Activated T-helper 1 cell treated with anti-CD3 and anti-CD28 coated beads, Interleukin-12 subunit alpha, Interleukin-12 subunit beta, Interleukin-2, Interleukin-4 antibody, amounts not matched to agents 30 ng/mL and 10 ng/mL and 1 ng/mL, durations not matched to agents 14 hours and 24 hours and 36 hours (primary cell): ENCODE measurements at regions of chr1 and their contacts with region 1.

Region 1: GRCh38 chr1:26472901-26473845 is 933 bp downstream of the HMGN2 start:
- DNase-seq: peak; percentile 95
- H3K4me3 Mint-ChIP-seq: peak overlapping the region; percentile 89
- H3K27ac Mint-ChIP-seq: peak overlapping the region; percentile 53
- H3K4me1 Mint-ChIP-seq: peaks cover 64% of the 10 kb centered on the region
- H3K27me3 Mint-ChIP-seq: no peaks in the 10 kb centered on the region

Region 2: GRCh38 chr1:25737130-25737529 is 736.0 kb before region 1 on chr1:
- intact Hi-C with region 1: no loop called
- DNase-seq: no peak
- H3K4me3 Mint-ChIP-seq: no peak overlapping the region
- H3K27ac Mint-ChIP-seq: no peak overlapping the region
- H3K4me1 Mint-ChIP-seq: no peaks in the 10 kb centered on the region
- H3K27me3 Mint-ChIP-seq: peaks cover 42% of the 10 kb centered on the region

Region 3: DNA sequence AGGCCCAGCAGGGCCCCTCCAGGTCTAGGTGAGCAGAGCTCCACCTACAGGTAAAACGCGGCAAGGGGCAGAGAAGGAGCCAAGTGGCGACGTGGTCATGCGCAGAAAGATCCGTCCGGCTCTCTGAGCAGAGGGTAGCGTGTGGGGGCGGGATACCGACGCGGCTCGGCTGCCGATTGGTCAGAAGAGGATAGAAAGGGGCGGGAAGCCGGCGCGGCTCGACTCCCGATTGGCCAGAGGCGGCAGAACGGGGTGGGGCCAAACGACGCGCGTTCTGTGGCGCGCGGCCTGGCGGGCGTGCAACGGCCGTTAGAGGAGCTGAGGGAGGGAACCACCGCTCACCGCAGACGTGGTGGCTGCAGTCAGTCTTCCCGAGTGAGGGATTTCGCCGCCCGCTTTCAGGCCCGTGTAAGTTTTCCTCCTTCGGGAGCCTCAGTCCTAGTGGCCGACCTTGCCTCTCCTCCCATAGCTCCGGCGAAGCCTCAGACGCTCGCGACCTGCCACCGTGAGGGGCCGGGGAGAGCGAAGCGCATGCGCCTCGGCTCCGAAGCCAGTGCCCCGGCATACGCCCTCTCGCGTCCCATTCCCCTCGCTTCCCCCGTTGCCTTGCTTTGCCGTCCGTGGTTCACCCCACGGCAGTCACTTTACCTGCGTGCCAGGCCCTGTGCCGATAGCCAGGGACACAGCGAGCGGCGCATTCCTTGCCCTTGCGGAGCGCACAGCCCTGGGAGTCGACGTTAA is 239.1 kb before region 1 on chr1 and contains the start of gene CEP85:
- intact Hi-C with region 1: loop called (anchors 1 kb)
- DNase-seq: peak; percentile 98
- H3K4me3 Mint-ChIP-seq: peak within 1 kb of the TSS; percentile 100
- H3K27ac Mint-ChIP-seq: peak within 1 kb of the TSS; percentile 96
- H3K4me1 Mint-ChIP-seq: peaks cover 43% of the 10 kb centered on the region
- H3K27me3 Mint-ChIP-seq: peaks cover 4% of the 10 kb centered on the region
- total RNA-seq, gene CEP85: 37.0 and 37.1 TPM in 2 replicates

Region 4: DNA sequence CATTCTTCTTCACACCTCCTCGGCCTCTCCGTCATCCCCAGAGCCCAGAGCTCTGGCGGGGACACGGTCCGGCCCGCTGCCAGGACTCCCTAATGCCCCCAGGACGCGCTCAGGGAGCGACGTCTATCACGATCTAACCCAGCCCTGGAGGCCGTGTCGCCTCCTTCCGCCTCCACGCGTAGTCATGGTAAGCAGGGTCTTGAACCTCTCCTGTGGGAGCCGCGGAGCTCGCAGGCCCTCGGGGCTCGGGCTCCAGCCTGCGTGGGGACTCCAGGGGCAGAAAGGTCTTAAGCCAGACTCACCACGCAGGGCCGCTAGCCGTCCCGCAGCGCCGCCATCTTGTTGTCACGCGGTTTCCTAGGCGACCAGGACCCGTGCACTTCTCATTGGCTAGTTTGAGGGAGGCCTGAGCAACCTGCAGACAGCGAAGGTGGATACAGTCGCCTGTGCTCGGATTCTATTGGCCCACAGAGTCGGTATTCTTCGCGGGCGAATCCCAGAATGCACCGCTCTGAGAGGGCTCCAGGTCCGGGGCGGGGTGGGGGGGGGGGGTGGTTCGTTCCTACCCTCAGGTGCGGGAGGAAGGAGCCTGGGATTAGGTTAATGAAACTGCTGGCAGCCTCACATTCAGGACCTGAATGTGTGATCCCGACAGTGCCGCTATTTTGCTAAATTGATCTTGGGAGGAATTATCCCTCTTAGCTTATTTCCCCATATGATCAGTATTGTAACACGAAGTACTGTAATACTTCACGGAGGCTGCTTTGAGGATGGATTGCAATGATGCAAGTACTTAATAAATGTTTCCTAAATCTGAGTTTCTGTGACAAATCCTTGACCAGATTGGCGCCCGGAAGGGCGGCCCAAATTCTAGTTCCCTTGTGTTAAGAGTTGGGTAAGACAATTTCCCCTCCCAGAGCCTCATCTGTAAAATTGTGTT is 166.6 kb before region 1 on chr1 and contains the start of gene UBXN11:
- intact Hi-C with region 1: loop called (anchors 1 kb)
- DNase-seq: peak; percentile 92
- H3K4me3 Mint-ChIP-seq: peak within 1 kb of the TSS; percentile 99
- H3K27ac Mint-ChIP-seq: peak within 1 kb of the TSS; percentile 95
- H3K4me1 Mint-ChIP-seq: peaks cover 41% of the 10 kb centered on the region
- H3K27me3 Mint-ChIP-seq: no peaks in the 10 kb centered on the region
- total RNA-seq, gene UBXN11: 14.8 and 22.1 TPM in 2 replicates

Region 5: DNA sequence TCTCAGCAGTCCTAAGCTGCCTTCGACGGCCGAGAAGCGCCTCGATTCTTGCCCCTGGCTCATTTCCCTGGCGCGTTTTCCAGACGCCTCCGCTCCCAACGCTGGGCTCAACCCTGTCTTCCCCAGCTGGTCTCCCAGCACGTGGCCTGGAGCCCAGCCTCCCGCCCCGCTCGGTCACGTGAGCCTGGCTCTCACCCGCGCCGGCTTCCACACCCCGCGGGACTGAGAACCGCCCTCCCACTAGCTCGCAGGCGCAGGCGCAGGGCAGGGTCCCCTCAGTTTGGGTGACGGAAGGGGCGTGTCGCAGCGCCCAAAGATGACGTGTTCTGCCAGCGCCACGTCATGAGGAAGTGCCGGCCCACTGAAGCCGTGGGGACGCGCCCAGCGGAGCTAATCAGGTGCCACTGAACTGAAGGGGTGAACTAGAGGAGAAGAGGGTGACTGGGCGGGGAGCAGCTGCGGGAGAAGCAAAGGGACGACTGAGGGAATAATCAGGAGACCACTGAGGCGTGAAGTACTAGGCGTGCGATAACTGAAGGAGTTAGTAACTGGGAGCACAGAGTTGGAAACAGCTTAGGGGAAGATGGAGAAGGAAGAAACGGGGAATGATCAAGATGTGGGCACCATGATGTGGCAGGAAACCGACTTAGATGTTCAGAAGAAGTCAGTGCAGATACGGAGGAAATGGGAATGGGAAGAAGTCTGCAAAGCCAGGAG is 41.0 kb before region 1 on chr1 and contains the start of gene DHDDS:
- intact Hi-C with region 1: loop called (anchors 1 kb)
- DNase-seq: peak; percentile 98
- H3K4me3 Mint-ChIP-seq: peak within 1 kb of the TSS; percentile 94
- H3K27ac Mint-ChIP-seq: peak within 1 kb of the TSS; percentile 89
- H3K4me1 Mint-ChIP-seq: peaks cover 18% of the 10 kb centered on the region
- H3K27me3 Mint-ChIP-seq: peaks cover 12% of the 10 kb centered on the region
- total RNA-seq, gene DHDDS: 58.4 and 60.9 TPM in 2 replicates

Region 6: DNA sequence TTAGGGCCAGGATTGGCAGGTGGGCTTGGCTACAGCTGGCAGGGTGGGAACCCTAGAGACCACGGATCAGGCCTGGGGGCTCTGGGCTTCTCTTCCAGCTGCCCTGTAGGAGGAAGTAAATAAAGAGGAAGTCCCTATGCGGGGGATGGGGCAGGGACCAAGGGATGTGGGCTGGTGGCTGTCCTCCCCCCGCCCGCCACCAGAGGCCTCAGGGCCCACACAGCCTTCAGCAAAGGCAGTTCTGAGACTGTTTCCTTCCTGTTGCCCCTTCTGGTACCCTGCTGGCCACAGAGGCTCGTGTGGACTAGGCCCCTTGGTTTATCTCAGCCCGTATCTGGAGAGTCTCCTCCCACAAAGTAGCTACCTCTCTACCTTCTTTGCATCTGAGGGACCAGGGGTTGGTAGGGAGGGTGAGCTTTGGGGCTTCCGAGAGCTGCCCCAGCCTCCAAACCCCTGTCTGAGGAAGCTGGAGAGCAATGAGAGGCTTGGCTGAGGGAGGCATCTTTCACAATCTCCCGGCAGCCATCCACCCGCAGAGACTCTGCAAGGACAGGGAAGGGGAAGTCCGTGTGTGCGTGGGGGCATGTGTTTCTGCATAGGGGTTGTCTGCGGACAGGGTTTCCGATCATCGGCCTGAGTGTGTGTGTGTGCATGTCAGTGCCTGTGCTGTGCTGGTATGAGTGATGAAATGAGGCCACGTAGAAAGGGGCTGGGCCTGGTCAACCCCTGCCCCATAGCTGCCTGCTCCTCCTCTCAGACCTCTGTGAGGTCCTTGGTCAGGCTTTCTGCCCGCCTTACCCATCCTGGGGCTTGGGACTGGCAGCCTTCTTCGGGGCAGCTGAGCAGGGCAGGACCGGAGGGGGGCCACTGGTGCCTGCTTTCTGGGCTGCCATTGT is 68.9 kb after region 1 on chr1:
- intact Hi-C with region 1: loop called (anchors 1 kb)
- DNase-seq: peak; percentile 73
- H3K4me3 Mint-ChIP-seq: peak overlapping the region; percentile 76
- H3K27ac Mint-ChIP-seq: peak overlapping the region; percentile 95
- H3K4me1 Mint-ChIP-seq: peaks cover 85% of the 10 kb centered on the region
- H3K27me3 Mint-ChIP-seq: no peaks in the 10 kb centered on the region

Region 7: GRCh38 chr1:26744075-26744959 is 271.1 kb after region 1 on chr1:
- intact Hi-C with region 1: loop called (anchors 2 kb)
- DNase-seq: peak; percentile 84
- H3K4me3 Mint-ChIP-seq: peak overlapping the region; percentile 73
- H3K27ac Mint-ChIP-seq: peak overlapping the region; percentile 93
- H3K4me1 Mint-ChIP-seq: peaks cover 77% of the 10 kb centered on the region
- H3K27me3 Mint-ChIP-seq: no peaks in the 10 kb centered on the region

Region 8: GRCh38 chr1:26921540-26922430 is 448.6 kb after region 1 on chr1 and contains the start of gene NUDC:
- intact Hi-C with region 1: loop called (anchors 2 kb)
- DNase-seq: peak; percentile 97
- H3K4me3 Mint-ChIP-seq: peak within 1 kb of the TSS; percentile 97
- H3K27ac Mint-ChIP-seq: peak within 1 kb of the TSS; percentile 96
- H3K4me1 Mint-ChIP-seq: peaks cover 31% of the 10 kb centered on the region
- H3K27me3 Mint-ChIP-seq: peaks cover 2% of the 10 kb centered on the region
- total RNA-seq, gene NUDC: 151 and 152 TPM in 2 replicates